CD4-positive, alpha-beta T cell (primary cell): ENCODE measurements at regions of chr12 and their contacts with region 1.

Region 1: DNA sequence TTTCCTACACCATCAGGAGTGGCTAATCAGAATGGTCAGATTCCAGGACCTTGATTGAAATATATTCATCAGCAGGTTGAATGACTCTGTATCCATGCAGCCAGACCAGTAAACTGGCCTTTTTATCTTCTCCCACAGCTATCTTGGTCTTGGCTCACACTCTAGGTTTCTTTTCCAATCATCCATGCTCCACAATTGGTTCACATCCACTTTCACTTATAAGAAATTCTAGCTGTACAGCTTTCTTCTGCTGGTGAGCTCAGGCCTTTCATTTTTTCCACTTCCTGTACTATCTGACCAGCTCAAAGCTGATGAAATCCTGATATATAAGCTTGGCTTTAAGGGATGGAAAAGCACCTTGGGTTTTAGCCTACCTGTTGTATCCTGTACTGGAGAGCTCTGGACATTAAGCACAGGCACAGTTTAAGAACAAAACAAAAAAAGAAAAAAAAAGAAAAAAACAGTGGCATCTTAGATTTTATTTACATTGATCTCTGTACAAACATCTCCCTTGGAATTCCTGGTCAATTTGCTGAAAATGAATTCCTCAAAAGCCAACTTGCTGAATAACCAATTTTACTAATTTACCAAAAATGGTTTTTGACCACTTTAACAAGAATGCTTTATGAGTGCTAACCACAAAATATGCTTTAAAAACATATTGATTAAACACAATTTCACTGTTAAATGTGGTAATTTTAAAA is 91.6 kb upstream of the PAWR start:
- DNase-seq: no peak
- ATAC-seq: no peak
- H3K4me3 ChIP-seq: no peak overlapping the region
- H3K4me3 Mint-ChIP-seq: no peak overlapping the region
- H3K27ac ChIP-seq: no peak overlapping the region
- H3K27ac Mint-ChIP-seq: no peak overlapping the region
- H3K4me1 ChIP-seq: no peaks in the 10 kb centered on the region
- H3K4me1 Mint-ChIP-seq: no peaks in the 10 kb centered on the region
- H3K27me3 ChIP-seq: no peaks in the 10 kb centered on the region
- H3K27me3 Mint-ChIP-seq: no peaks in the 10 kb centered on the region
- CTCF ChIP-seq: no peak

Region 2: DNA sequence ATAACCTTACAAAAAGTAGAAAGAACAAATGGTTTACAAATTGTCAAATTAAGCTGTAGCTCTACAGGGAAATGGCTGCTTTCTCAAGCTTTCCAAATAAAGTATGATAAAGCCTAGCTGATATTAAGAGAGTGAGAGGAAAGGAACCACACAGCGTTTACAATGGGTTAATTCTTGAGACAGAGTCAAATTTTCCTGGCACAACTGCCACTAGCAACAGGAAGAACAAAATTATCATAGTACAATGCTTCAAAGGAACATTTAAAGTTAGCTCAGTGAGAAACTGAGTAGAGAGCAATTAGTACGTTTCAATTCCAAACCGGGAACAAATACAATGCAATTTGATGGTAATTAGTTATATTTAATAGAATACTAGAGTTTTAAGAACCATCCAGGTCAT is 36.5 kb after region 1 on chr12:
- CTCF ChIA-PET with region 1: no interaction called
- POLR2A ChIA-PET with region 1: no interaction called
- intact Hi-C with region 1: loop called in 1 of 2 experiments (anchors 5 kb)
- DNase-seq: no peak
- ATAC-seq: no peak
- H3K4me3 ChIP-seq: no peak overlapping the region
- H3K4me3 Mint-ChIP-seq: no peak overlapping the region
- H3K27ac ChIP-seq: no peak overlapping the region
- H3K27ac Mint-ChIP-seq: no peak overlapping the region
- H3K4me1 ChIP-seq: no peaks in the 10 kb centered on the region
- H3K4me1 Mint-ChIP-seq: peaks cover 6% of the 10 kb centered on the region
- H3K27me3 ChIP-seq: no peaks in the 10 kb centered on the region
- H3K27me3 Mint-ChIP-seq: no peaks in the 10 kb centered on the region
- CTCF ChIP-seq: no peak

Region 3: DNA sequence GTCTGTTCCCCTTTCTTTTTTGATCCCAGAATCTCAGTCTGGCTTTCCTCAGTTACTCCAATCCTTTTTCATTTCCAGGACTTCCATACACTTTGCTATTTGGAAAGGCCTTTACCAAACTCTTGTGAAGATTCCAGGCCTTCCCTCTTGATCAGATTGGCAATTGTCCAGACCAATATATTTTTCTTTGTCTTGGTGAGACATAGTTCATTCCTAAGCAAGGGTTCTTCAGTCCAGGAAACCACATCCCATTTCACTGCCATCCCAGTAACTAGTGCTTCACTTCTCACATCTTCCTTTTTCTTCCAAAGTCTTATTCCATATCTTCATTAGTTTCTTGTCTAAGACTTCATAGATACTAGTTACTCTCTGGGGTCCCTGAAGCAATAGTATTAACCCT is 659.6 kb after region 1 on chr12:
- CTCF ChIA-PET with region 1: no interaction called
- POLR2A ChIA-PET with region 1: no interaction called
- intact Hi-C with region 1: no loop called
- DNase-seq: no peak
- ATAC-seq: no peak
- H3K4me3 ChIP-seq: no peak overlapping the region
- H3K4me3 Mint-ChIP-seq: no peak overlapping the region
- H3K27ac ChIP-seq: no peak overlapping the region
- H3K27ac Mint-ChIP-seq: no peak overlapping the region
- H3K4me1 ChIP-seq: no peaks in the 10 kb centered on the region
- H3K4me1 Mint-ChIP-seq: no peaks in the 10 kb centered on the region
- H3K27me3 ChIP-seq: no peaks in the 10 kb centered on the region
- H3K27me3 Mint-ChIP-seq: no peaks in the 10 kb centered on the region
- CTCF ChIP-seq: no peak